Activated CD4-positive, alpha-beta memory T cell treated with anti-CD3 and anti-CD28 coated beads, Interleukin-2, amount 10 ng/mL, durations not matched to agents 7 days and 5 days (primary cell): ENCODE measurements at regions of chr3 and their contacts with region 1.

Region 1: DNA sequence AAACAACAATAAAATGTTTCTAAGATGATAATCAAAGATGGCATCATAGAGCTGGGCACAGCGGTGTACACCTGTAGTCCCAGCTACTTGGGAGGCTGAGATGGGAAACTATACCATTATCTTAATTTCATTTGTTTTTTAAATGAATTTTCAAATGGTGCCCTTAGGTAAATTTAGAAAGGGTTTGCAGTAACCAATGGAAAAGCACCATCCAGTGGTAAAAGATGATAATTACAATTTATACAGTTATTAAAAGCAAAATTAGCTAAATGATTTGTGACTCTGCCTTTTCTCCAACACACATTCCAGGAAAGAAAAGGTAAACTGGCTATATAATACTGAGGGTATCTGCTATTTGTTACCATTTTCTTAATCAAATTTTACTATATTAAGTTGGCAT is 14.4 kb upstream of the ANKRD28 start:
- DNase-seq: no peak
- H3K4me3 Mint-ChIP-seq: no peak overlapping the region
- H3K27ac Mint-ChIP-seq: no peak overlapping the region
- H3K4me1 Mint-ChIP-seq: peaks cover 48% of the 10 kb centered on the region
- H3K27me3 Mint-ChIP-seq: no peaks in the 10 kb centered on the region

Region 2: DNA sequence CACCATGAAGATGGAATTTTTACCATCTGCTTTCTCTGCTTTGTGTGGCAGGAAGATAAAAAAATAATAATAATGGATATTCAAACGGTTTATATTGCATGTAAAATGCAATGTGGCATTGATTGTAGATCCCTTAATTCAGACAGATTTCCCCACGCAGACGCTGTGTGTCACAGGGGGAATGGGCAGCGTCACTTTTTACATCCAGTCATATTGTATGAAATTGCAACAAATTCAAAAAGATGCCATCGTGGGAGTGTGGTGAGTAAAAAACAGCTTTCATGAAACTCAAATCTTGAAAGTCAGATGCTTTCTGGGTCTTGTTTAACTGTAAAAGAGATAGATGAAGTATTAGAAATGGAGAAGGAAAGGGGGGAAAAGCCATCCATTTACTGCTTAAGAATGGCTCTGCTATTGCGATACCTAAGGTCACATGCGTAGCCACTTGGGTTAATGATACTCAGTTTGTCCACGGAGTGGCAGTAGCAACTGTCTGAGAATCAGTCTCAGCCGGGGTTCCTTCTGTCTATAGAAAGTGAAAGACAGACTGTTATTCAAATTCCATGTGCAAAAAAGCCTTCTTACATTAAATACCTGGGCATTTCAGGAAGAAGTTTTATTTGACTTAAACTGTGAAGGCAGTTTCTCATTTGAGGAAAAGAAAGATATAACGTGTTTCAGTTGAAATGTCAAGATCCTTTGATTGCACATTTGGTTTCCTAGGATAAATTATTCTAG is 182.2 kb before region 1 on chr3:
- CTCF ChIA-PET with region 1: interaction called, 69 read pairs
- POLR2A ChIA-PET with region 1: interaction called, 11 read pairs
- DNase-seq: peak; percentile 76
- H3K4me3 Mint-ChIP-seq: no peak overlapping the region
- H3K27ac Mint-ChIP-seq: no peak overlapping the region
- H3K4me1 Mint-ChIP-seq: peaks cover 32% of the 10 kb centered on the region
- H3K27me3 Mint-ChIP-seq: no peaks in the 10 kb centered on the region

Region 3: GRCh38 chr3:15636003-15636709 is 176.0 kb before region 1 on chr3:
- CTCF ChIA-PET with region 1: interaction called, 69 read pairs
- POLR2A ChIA-PET with region 1: interaction called, 11 read pairs
- DNase-seq: peak; percentile 56
- H3K4me3 Mint-ChIP-seq: peak overlapping the region; percentile 14
- H3K27ac Mint-ChIP-seq: peak overlapping the region; percentile 81
- H3K4me1 Mint-ChIP-seq: peaks cover 51% of the 10 kb centered on the region
- H3K27me3 Mint-ChIP-seq: no peaks in the 10 kb centered on the region

Region 4: DNA sequence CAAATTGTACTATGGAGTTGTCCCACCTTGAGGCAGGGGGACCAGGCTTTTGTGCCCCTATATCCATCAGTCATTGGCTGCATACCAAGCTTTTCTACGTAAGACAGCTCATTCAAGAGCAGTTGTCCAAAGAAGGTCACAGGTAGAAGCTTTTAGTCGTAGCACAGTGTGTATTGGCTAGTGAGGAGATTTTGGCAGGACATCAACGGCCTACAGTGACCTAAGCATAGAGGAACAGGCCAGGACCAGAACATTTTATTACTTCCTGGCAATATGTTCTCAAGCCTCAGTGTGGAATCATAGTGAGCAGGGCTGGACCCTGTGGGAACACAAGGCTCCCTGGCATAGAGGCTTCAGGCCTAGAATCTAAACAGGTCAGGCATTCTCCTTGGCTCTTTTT is 91.0 kb after region 1 on chr3:
- CTCF ChIA-PET with region 1: no interaction called
- POLR2A ChIA-PET with region 1: no interaction called
- DNase-seq: no peak
- H3K4me3 Mint-ChIP-seq: no peak overlapping the region
- H3K27ac Mint-ChIP-seq: no peak overlapping the region
- H3K4me1 Mint-ChIP-seq: no peaks in the 10 kb centered on the region
- H3K27me3 Mint-ChIP-seq: no peaks in the 10 kb centered on the region